Activated naive CD4-positive, alpha-beta T cell treated with anti-CD3 and anti-CD28 coated beads for 36 hours (primary cell): ENCODE measurements at regions of chr14 and their contacts with region 1.

Region 1: DNA sequence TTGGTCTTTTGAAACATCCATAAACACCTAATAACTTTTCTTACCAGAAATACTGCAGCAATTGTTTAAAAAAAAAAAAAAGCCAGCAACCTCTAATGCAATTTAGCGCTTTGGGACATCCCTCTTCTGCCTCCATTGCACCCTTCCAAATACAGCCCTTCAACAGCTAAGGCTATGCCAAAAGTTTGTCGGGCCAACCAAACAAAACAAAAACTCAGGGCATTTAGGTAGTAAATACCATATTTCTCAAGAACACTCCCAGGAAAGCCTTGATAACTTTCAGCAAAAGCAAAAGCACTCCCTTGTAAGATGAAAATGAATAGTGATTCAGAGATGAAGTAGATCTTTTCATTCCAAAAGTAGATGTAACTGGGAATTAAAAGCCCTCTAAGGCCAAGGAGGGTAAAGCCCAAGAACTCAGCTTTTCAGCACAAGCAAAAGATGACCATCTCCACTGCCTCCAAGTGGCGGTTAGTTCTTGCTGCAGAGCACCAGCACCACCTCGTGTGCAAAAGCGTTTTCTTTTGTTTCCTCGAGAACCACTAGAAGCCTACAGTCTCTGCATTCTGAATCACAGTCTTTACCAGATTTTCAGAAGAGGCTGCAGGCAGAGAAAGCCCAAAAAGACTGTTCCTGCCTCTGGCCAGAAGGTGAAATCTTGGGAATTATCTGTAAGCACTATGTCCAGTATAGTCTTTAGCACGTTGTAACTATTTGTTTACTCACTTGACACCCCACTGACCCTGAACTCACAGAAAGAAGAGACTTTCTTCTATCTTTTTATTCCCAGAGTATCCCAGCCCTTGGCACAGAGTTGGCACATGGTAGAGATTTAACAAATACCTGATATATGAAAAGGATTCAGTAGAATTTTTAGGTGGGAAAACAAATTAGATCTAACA is 53.1 kb downstream of the SIX6 start:
- DNase-seq: peak; percentile 59
- H3K4me3 Mint-ChIP-seq: no peak overlapping the region
- H3K27ac Mint-ChIP-seq: no peak overlapping the region
- H3K4me1 Mint-ChIP-seq: no peaks in the 10 kb centered on the region
- H3K27me3 Mint-ChIP-seq: no peaks in the 10 kb centered on the region

Region 2: DNA sequence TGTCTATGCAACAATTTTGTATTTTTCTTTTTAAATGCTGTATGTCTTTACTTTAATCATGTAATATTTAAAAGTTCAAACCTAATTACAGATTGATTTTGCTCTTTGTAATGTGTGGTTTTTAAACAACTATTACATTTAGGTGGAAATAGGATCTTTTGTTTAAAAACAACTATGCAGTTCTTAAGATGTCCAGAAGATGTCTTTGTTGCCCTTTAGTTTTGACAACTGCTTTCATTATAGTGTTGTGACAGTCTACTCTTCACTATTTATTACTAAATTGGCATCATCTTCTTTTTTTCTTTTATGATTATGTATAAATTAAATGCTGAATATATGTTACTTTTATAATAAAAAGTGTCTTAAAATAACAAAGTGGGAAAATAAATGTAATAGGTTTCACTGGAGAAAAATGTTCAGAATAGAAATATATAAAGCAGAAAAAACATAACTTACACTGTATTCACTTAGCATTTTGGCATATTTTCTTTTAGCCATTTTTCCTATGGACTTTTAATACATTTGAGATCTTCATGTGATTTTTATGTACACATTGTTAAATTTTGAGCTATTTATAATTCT is 497.5 kb before region 1 on chr14:
- CTCF ChIA-PET with region 1: no interaction called
- intact Hi-C with region 1: loop called (anchors 2 kb)
- DNase-seq: no peak
- H3K4me3 Mint-ChIP-seq: no peak overlapping the region
- H3K27ac Mint-ChIP-seq: no peak overlapping the region
- H3K4me1 Mint-ChIP-seq: no peaks in the 10 kb centered on the region
- H3K27me3 Mint-ChIP-seq: peaks cover 1% of the 10 kb centered on the region

Region 3: GRCh38 chr14:60195179-60195810 is 366.8 kb before region 1 on chr14:
- CTCF ChIA-PET with region 1: no interaction called
- intact Hi-C with region 1: loop called (anchors 2 kb)
- DNase-seq: no peak
- H3K4me3 Mint-ChIP-seq: no peak overlapping the region
- H3K27ac Mint-ChIP-seq: no peak overlapping the region
- H3K4me1 Mint-ChIP-seq: peaks cover 11% of the 10 kb centered on the region
- H3K27me3 Mint-ChIP-seq: peaks cover 10% of the 10 kb centered on the region

Region 4: DNA sequence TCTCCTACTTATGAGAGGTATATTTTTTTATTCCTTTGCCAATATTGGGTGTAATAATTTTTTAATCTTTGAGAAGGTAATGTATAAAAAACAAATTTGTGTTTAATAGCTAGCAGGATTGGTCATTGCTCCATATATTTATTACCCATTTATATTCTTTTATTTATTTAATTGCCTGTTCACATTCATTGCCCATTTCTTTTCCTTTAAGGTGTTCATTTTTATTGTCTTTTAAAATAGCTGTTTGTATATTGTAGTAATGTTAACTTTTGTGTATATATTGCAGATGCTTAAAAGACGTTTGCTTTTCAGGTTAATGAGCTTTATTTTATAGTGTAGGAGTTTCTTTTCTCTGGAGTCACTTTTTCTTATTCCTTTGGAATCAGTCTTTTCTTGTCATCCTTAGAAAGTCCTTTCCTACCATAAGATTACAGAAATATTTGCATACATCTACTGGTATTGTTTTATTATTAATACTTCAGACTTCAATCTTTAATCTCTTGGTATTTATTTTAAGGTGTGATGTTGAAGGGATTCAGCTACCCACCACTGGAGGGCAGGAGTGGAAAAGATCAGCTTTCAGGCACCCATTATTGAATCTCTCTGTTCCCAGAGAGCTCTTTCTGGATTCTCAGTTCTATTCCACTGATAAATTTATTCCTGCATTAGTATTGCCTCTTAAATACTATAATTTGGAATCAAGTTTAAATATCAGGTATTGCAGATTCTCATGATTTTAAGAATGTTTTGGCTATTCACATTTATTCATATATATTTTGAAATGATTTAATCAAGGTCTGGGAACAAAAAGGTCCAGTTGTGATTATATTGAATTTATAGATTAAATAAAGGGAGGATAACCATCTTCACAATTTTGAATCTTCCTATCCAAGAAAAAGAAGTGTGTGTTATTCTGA is 295.8 kb before region 1 on chr14:
- CTCF ChIA-PET with region 1: no interaction called
- intact Hi-C with region 1: loop called (anchors 1 kb)
- DNase-seq: peak; percentile 34
- H3K4me3 Mint-ChIP-seq: no peak overlapping the region
- H3K27ac Mint-ChIP-seq: no peak overlapping the region
- H3K4me1 Mint-ChIP-seq: peaks cover 16% of the 10 kb centered on the region
- H3K27me3 Mint-ChIP-seq: no peaks in the 10 kb centered on the region

Region 5: DNA sequence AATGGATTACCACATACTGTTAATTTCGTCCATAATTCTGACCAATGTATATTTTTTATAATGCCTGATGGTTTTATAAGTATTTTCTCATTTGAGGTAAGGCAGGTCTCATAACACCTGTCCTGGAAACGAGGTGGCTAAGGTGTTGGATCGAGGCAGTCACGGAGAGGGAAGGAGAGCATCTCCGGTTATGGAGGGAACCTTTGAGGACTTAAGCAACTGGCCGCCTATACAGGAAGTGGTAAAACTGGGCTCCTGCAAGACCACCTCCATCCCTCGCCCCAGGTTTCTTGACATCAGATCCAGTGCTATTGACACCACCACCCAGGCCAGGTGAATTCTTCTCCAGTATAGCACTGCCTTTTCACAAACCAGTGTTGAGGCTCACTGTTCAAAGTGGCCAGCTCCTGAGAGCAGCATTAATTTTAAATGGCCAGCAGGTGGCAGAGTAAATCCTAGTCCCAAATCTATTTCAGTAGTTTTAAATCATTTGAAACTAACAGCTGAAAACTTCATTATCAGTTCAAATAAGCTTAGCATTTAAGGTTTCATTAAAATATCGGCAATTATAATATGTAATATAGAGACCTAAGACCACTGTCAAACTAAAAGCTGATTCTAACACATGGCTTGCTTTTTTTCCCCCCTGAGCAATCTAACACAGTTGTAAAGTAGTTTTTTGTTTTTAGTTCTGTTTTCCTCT is 212.3 kb before region 1 on chr14:
- CTCF ChIA-PET with region 1: interaction called, 15 read pairs
- intact Hi-C with region 1: loop called (anchors 1 kb)
- DNase-seq: peak; percentile 51
- H3K4me3 Mint-ChIP-seq: no peak overlapping the region
- H3K27ac Mint-ChIP-seq: no peak overlapping the region
- H3K4me1 Mint-ChIP-seq: no peaks in the 10 kb centered on the region
- H3K27me3 Mint-ChIP-seq: peaks cover 3% of the 10 kb centered on the region

Region 6: DNA sequence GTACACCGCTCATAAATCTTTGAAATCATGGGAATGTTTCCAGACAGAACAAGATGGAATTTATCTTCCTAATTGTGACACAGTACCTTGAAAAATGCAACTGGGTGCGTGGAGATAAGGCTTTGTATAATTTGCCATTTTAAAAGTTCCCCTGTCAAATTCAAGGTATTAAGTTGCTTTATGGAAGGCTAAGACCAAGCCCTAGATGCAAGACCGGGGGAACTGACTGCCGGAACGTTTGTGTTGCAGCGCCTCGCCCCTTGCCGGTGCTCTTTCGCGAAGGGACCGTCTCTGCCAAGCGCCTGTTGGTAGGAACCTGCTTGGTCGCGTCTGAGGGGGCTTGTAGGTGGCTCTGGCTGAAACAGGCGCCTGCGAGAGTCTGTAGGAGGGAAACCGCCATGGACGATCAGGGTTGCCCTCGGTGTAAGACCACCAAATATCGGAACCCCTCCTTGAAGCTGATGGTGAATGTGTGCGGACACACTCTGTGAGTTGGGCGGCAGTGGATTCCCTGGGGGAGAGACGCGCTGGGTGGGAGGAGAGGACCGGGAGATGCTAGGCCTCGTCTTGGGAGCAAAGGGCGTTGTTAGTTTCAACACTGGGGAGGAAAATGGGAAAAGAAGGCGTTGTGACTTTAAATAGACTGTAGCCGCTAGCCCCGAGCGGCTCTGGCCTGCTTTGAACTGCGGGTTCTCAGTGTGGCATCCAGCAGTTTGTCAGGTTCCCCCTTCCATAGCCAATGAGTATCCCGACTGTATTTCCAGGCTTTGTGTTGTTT is 172.6 kb after region 1 on chr14 and contains the start of gene MNAT1:
- CTCF ChIA-PET with region 1: no interaction called
- intact Hi-C with region 1: no loop called
- DNase-seq: peak; percentile 83
- H3K4me3 Mint-ChIP-seq: peak within 1 kb of the TSS; percentile 97
- H3K27ac Mint-ChIP-seq: peak within 1 kb of the TSS; percentile 86
- H3K4me1 Mint-ChIP-seq: peaks cover 17% of the 10 kb centered on the region
- H3K27me3 Mint-ChIP-seq: peaks cover 10% of the 10 kb centered on the region
- total RNA-seq, gene MNAT1: 44.0 to 44.2 TPM

Region 7: GRCh38 chr14:60945984-60946383 is 383.9 kb after region 1 on chr14:
- CTCF ChIA-PET with region 1: no interaction called
- intact Hi-C with region 1: no loop called
- DNase-seq: no peak
- H3K4me3 Mint-ChIP-seq: no peak overlapping the region
- H3K27ac Mint-ChIP-seq: no peak overlapping the region
- H3K4me1 Mint-ChIP-seq: peaks cover 7% of the 10 kb centered on the region
- H3K27me3 Mint-ChIP-seq: no peaks in the 10 kb centered on the region